PC-3 (cell line): ENCODE measurements at regions of chr7 and their contacts with region 1.

Region 1: DNA sequence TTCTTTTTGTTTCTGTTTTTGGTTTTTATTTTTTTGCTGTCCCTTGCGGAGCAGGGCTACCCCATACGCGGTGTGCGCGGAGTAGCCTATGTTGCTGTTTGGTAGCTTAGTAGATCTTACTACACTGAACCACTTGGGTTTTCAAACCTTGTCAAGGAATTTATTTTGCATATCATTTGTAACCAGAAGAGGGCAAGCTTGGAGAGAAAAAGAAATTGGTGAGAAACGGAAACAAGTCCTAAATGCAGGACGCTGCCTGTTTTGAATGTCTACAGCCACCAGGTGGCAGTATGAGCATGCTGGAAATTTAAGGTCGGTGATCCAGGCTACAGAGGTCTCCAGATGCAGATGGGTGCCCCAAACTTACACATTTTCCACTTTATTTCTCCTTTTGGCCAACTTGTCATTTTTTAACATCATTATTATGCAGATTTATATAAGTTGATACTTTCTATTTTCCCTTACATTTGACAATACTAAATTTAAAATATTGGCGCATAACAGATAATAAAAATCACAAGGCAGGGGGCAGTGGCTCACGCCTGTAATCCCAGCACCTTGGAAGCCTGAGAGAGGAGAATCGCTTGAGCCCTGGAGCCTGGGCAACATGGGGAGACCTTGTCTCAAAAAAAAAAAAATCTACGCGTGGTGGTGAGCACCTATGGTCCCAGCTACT is 15.3 kb upstream of the TRA2A start:
- DNase-seq: peak; percentile 94
- ATAC-seq: peak; percentile 81
- H3K4me3 ChIP-seq: no peak overlapping the region
- H3K27ac ChIP-seq: no peak overlapping the region
- H3K4me1 ChIP-seq: no peaks in the 10 kb centered on the region
- H3K27me3 ChIP-seq: no peaks in the 10 kb centered on the region
- CTCF ChIP-seq: peak; percentile 92

Region 2: GRCh38 chr7:23462846-23463245 is 84.2 kb before region 1 on chr7:
- CTCF ChIA-PET with region 1: interaction called, 10 read pairs
- POLR2A ChIA-PET with region 1: no interaction called
- intact Hi-C with region 1: no loop called
- DNase-seq: peak; percentile 61
- ATAC-seq: peak; percentile 71
- H3K4me3 ChIP-seq: no peak overlapping the region
- H3K27ac ChIP-seq: no peak overlapping the region
- H3K4me1 ChIP-seq: peaks cover 40% of the 10 kb centered on the region
- H3K27me3 ChIP-seq: no peaks in the 10 kb centered on the region
- CTCF ChIP-seq: peak; percentile 63